Endothelial cell of umbilical vein (primary cell): ENCODE measurements at regions of chr19 and their contacts with region 1.

Region 1: GRCh38 chr19:40813182-40813958 is 14.4 kb downstream of the EGLN2 start:
- DNase-seq: no peak
- H3K4me3 ChIP-seq: no peak overlapping the region
- H3K27ac ChIP-seq: no peak overlapping the region
- H3K4me1 ChIP-seq: peaks cover 11% of the 10 kb centered on the region
- H3K27me3 ChIP-seq: peaks cover 3 to 8% of the 10 kb centered on the region in 2 experiments
- CTCF ChIP-seq: no peak
- POLR2A ChIP-seq: no peak

Region 2: DNA sequence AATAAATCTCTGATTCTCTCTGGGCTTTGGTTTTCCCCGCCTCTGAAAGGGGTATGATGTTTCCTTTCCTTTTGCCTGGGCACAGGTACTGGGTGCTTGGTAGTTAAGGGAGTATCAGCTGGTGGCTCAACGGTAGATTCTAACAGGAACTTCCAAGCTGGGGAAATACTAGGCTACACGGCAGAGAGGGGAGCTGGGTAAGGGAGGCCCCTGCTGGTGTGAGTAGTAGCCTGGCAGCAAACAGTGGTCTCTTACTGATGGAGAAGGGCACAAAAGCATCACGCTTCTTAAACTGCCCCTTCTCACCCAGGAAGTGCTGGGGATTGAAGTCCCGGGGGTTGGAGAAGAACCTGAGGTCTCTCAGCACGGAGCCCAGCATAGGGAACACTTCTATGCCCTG is 95.6 kb after region 1 on chr19:
- CTCF ChIA-PET with region 1: no interaction called
- POLR2A ChIA-PET with region 1: no interaction called
- dilution Hi-C with region 1: no loop called
- intact Hi-C with region 1: no loop called
- DNase-seq: peak; percentile 49
- H3K4me3 ChIP-seq: no peak overlapping the region
- H3K27ac ChIP-seq: no peak overlapping the region
- H3K4me1 ChIP-seq: no peaks in the 10 kb centered on the region
- H3K27me3 ChIP-seq: peaks cover 0 to 14% of the 10 kb centered on the region in 2 experiments
- CTCF ChIP-seq: peak in 1 of 2 donors; percentile 65
- POLR2A ChIP-seq: no peak

Region 3: DNA sequence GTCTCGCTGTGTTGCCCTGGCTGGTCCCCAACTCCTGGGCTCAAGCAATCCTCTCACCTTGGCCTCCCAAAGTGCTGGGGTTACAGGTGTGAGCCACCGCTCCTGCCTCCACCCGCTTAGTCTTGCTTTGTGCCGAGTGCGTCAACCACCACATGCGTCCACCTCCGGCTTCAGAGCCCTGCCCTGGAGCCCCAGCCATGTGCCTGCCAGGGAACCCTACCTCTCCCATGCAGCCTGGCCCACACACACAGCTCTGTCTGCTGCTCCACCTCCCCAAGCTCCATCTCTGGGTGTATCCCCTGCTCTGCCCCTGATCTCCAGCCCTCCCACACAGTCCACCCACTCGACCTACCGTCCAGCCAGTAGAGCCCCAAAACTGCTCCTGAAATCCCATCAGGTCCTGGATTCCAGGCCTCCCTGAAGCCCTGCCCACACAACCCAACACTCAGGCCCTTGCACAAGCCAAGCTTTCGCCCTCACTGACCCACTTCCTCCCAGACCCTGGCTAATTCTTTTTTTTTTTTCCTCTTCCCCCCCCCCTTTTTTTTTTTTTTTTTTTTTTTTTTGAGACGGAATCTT is 310.4 kb after region 1 on chr19:
- CTCF ChIA-PET with region 1: no interaction called
- POLR2A ChIA-PET with region 1: no interaction called
- dilution Hi-C with region 1: no loop called
- intact Hi-C with region 1: loop called (anchors 5 kb)
- DNase-seq: no peak
- H3K4me3 ChIP-seq: no peak overlapping the region
- H3K27ac ChIP-seq: no peak overlapping the region
- H3K4me1 ChIP-seq: no peaks in the 10 kb centered on the region
- H3K27me3 ChIP-seq: peaks cover 0 to under 1% of the 10 kb centered on the region in 2 experiments
- CTCF ChIP-seq: no peak
- POLR2A ChIP-seq: no peak